Mammary epithelial cell (primary cell): ENCODE measurements at regions of chr6 and their contacts with region 1.

Region 1: GRCh38 chr6:90478789-90479602 is 107.9 kb downstream of the MAP3K7 start:
- DNase-seq: peak; percentile 93
- H3K4me3 ChIP-seq: no peak overlapping the region
- H3K27ac ChIP-seq: no peak overlapping the region
- H3K4me1 ChIP-seq: peaks cover 16% of the 10 kb centered on the region
- H3K27me3 ChIP-seq: no peaks in the 10 kb centered on the region
- CTCF ChIP-seq: peak; percentile 80 to 88

Region 2: DNA sequence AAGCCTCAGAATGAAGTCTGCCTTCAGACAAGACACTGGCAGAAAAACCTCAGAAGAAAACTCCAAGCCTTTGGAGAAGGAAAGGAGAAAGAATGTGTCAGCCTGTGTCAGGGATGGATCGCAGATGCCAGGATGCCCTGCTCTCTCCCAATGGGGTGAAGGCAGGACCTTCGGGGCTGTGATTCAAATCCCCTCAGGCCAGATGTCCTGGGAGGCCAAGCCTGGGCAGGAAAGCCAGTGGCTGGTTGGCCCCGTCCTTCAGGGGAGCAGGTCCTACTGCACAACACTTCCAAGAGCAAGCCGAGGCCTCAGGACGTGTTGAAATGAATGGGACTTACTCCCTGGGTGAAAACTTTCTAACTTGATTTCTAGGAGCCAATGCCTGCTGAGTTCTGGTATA is 548.2 kb before region 1 on chr6:
- CTCF ChIA-PET with region 1: no interaction called
- dilution Hi-C with region 1: no loop called
- in situ Hi-C with region 1: no loop called
- intact Hi-C with region 1: no loop called
- DNase-seq: no peak
- H3K4me3 ChIP-seq: no peak overlapping the region
- H3K27ac ChIP-seq: no peak overlapping the region
- H3K4me1 ChIP-seq: peaks cover 31% of the 10 kb centered on the region
- H3K27me3 ChIP-seq: no peaks in the 10 kb centered on the region
- CTCF ChIP-seq: no peak

Region 3: GRCh38 chr6:89970609-89971337 is 508.2 kb before region 1 on chr6:
- CTCF ChIA-PET with region 1: no interaction called
- dilution Hi-C with region 1: no loop called
- in situ Hi-C with region 1: loop called in 1 of 2 experiments (anchors 10 kb)
- intact Hi-C with region 1: loop called (anchors 1 kb)
- DNase-seq: peak; percentile 45
- H3K4me3 ChIP-seq: no peak overlapping the region
- H3K27ac ChIP-seq: no peak overlapping the region
- H3K4me1 ChIP-seq: peaks cover 6% of the 10 kb centered on the region
- H3K27me3 ChIP-seq: no peaks in the 10 kb centered on the region
- CTCF ChIP-seq: peak; percentile 54 to 64

Region 4: DNA sequence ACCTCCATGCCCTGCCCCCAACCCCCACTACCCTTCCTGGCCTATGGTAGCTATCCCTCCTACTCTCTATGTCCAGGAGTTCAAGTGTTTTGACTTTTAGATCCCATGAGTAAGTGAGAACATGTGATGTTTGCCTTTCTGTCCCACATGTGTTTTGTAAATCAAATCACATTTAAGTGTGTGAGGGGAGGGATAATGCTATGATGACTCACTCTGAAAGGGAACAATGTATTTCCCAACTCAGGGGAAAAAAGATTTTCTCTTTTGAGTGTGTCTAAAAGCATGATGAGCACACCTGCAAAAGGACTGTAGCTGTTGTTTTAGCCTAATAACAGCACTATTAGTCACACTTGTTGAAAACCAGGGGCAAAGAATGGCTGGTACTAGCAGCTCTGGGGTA is 391.0 kb before region 1 on chr6:
- CTCF ChIA-PET with region 1: no interaction called
- dilution Hi-C with region 1: no loop called
- in situ Hi-C with region 1: loop called in 1 of 2 experiments (anchors 5 kb)
- intact Hi-C with region 1: loop called (anchors 2 kb)
- DNase-seq: peak; percentile 97
- H3K4me3 ChIP-seq: no peak overlapping the region
- H3K27ac ChIP-seq: peak overlapping the region; percentile 72
- H3K4me1 ChIP-seq: peaks cover 31% of the 10 kb centered on the region
- H3K27me3 ChIP-seq: no peaks in the 10 kb centered on the region
- CTCF ChIP-seq: no peak

Region 5: DNA sequence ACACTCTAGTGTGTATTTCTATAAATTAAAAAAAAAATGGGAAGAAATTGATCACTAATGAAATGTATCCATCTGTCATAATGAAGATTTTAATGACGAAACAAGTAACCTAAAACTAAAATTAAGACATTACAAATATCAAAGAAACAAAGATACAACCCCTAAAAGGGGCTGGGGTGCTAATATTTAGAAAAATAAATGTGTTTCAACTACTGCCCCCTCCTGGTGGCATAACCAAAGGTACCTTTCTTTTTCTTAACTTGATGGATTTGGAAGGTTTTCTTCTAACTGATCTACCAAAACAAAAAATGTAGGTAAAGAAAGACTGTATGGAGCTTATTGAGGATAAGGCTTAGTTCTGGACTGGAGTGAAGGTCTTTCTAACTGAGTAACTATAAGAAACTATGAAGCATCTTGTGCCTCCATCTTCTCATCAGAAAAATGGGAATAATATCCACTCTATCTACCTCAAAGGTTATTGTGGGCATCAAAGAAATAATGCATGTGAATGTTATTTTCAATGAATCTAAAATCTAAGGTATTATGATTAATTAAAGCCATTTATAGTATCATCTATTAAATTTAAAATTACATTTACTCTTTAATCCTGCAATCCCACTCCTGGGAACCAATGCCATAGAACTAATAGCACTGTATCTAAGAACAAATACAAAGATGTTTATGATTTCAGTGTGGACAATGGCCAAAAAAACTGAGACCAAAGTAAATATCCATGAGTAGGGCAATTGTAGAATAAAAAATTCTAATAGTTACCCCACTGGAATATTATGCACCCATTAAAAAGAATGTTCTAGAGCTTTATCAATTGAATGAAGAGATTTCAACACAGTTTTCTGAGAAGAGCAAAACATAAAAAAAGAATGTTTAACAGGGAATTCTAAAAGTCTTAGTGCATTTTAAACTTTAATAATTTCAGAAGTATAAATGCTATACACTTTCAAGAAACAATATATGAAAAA is 299.5 kb before region 1 on chr6:
- CTCF ChIA-PET with region 1: no interaction called
- dilution Hi-C with region 1: no loop called
- in situ Hi-C with region 1: no loop called
- intact Hi-C with region 1: loop called (anchors 5 kb)
- DNase-seq: no peak
- H3K4me3 ChIP-seq: no peak overlapping the region
- H3K27ac ChIP-seq: no peak overlapping the region
- H3K4me1 ChIP-seq: peaks cover 17% of the 10 kb centered on the region
- H3K27me3 ChIP-seq: no peaks in the 10 kb centered on the region
- CTCF ChIP-seq: peak; percentile 40 to 43

Region 6: DNA sequence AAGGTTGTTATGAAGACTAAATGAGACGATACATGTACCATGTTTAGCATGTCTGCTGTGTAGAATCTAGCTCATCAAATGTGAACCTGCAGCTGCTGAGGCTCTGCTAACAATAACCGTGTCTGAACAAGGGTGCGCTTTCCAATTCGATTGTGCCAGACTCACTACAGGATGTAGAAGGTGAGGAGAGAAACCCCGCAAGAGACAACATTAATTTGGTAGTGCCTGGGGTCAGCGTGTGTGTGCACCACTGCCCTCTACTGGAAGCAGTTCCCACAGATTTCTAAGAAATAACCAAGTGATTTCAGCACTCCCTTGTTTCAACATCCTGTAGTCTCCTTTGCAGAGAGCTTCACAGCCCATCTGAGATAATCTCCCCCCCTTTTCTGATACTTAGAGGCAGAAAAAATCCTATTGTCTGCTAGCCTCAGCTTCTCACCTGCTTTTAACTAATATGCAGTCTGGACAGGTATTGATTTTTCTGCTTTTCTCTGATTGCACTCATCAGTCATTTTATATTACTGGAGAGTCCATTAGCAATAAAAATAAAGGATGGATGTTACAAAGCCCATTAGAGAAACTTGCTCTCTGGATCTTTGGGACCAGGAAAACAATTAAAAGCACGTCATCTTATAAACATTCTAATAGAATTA is 85.6 kb before region 1 on chr6:
- CTCF ChIA-PET with region 1: no interaction called
- dilution Hi-C with region 1: no loop called
- in situ Hi-C with region 1: no loop called
- intact Hi-C with region 1: loop called (anchors 1 kb)
- DNase-seq: peak; percentile 57
- H3K4me3 ChIP-seq: no peak overlapping the region
- H3K27ac ChIP-seq: no peak overlapping the region
- H3K4me1 ChIP-seq: no peaks in the 10 kb centered on the region
- H3K27me3 ChIP-seq: no peaks in the 10 kb centered on the region
- CTCF ChIP-seq: peak; percentile 75 to 80

Region 7: GRCh38 chr6:90403489-90404381 is 75.3 kb before region 1 on chr6:
- CTCF ChIA-PET with region 1: no interaction called
- dilution Hi-C with region 1: loop called (anchors 5 kb)
- in situ Hi-C with region 1: loop called in 1 of 2 experiments (anchors 10 kb)
- intact Hi-C with region 1: no loop called
- DNase-seq: peak; percentile 67
- H3K4me3 ChIP-seq: no peak overlapping the region
- H3K27ac ChIP-seq: no peak overlapping the region
- H3K4me1 ChIP-seq: peaks cover 31% of the 10 kb centered on the region
- H3K27me3 ChIP-seq: no peaks in the 10 kb centered on the region
- CTCF ChIP-seq: no peak

Region 8: GRCh38 chr6:90425161-90425641 is 53.8 kb before region 1 on chr6:
- CTCF ChIA-PET with region 1: no interaction called
- dilution Hi-C with region 1: no loop called
- in situ Hi-C with region 1: no loop called
- intact Hi-C with region 1: no loop called
- DNase-seq: no peak
- H3K4me3 ChIP-seq: no peak overlapping the region
- H3K27ac ChIP-seq: no peak overlapping the region
- H3K4me1 ChIP-seq: no peaks in the 10 kb centered on the region
- H3K27me3 ChIP-seq: no peaks in the 10 kb centered on the region
- CTCF ChIP-seq: no peak

Region 9: DNA sequence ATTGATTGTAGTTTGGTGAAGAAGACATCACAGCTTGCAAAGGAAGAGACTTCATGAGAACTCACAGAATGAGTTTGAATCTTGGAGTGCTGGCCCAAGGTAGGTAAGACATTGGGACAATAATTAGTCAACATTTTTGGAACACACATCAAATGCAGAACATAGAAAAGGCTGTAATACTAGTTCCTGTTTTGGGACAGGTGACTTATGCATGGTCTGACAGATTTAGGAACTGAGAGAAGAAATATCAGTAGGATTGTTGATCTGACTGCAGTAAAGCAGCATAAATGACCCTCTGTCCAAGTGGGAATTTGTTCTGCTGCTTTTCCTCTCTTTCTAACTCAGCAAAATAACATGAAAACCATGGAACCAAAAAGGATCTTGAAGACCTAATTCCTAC is 210.2 kb after region 1 on chr6:
- CTCF ChIA-PET with region 1: no interaction called
- dilution Hi-C with region 1: no loop called
- in situ Hi-C with region 1: no loop called
- intact Hi-C with region 1: no loop called
- DNase-seq: no peak
- H3K4me3 ChIP-seq: no peak overlapping the region
- H3K27ac ChIP-seq: no peak overlapping the region
- H3K4me1 ChIP-seq: no peaks in the 10 kb centered on the region
- H3K27me3 ChIP-seq: peaks cover 2% of the 10 kb centered on the region
- CTCF ChIP-seq: no peak

Region 10: DNA sequence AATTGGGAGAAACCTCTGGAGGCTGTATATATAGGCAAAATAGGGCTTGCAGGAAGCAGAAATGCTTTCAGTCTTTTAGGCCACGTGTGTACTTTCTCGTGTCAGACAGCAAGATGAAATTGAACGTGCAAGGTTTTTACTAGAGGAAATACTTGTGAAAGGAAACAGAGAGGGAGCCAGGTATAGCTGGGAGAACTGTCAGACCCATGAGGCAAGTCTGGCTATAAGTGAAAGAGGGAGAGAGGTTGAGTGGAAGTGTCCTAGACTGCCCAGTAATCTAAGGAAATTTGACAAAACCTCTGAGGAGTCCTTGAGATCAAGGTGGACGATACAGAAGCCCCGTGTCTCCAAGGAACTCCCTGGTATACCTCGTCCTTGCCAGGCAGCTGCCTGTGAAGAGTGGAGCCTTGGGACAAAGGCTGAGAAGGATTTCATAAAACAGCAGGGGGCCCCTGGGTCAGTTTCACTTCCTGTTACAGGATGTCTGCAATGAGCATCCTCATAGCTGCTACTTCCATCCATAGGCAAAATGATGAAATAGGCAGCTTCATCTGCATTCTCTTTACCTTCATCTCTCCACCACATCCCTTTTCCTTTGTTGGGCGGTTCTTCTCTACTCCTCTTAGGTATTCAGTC is 222.3 kb after region 1 on chr6:
- CTCF ChIA-PET with region 1: no interaction called
- dilution Hi-C with region 1: no loop called
- in situ Hi-C with region 1: no loop called
- intact Hi-C with region 1: no loop called
- DNase-seq: no peak
- H3K4me3 ChIP-seq: no peak overlapping the region
- H3K27ac ChIP-seq: no peak overlapping the region
- H3K4me1 ChIP-seq: no peaks in the 10 kb centered on the region
- H3K27me3 ChIP-seq: no peaks in the 10 kb centered on the region
- CTCF ChIP-seq: no peak